B cell (primary cell): ENCODE measurements at regions of chr12 and their contacts with region 1.

Region 1: DNA sequence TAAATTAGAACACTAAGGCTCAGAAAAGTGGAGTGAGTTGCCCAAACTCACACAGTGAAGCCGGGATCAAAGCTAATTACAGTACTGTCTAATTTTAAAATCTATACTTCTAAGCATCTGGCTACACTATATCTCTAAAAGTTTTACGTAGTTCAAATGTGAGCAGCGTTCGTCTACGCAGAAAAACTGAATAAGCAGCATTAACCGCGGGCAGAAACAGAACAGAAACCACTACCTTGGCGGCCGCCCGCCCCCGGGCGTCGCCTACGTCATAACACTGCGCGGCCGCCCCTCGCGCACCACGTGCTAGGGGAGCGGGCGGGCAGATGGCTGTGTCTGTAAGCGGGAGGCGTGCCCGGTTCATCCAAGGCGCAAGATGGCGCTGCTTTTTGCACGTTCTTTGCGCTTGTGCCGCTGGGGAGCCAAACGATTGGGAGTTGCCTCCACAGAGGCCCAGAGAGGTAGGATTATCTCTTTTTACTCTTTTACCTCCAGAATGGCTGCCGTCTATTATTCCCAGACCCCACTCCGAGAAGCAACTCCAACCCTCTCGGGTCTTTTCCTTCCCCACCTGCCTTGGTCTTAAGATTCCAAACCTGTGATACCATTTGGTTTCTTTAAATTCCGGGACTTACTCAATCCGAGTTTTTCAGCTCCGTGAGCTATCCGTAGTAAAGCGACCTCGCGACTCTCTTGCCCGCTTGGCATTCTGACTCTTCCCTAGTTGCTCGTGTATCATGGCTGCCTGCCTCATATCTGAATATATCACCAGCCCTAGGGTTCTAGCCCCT is at the start of gene SPRYD4:
- DNase-seq: peak; percentile 97
- ATAC-seq: peak; percentile 93
- H3K4me3 ChIP-seq: peak within 1 kb of the TSS; percentile 91 to 100 (median 96)
- H3K4me3 Mint-ChIP-seq: peak within 1 kb of the TSS; percentile 93
- H3K27ac ChIP-seq: peak within 1 kb of the TSS; percentile 86 to 87
- H3K27ac Mint-ChIP-seq: peak within 1 kb of the TSS; percentile 98
- H3K4me1 ChIP-seq: peaks cover 12 to 28% of the 10 kb centered on the region in 2 donors
- H3K4me1 Mint-ChIP-seq: peaks cover 28% of the 10 kb centered on the region
- H3K27me3 ChIP-seq: no peaks in the 10 kb centered on the region
- H3K27me3 Mint-ChIP-seq: no peaks in the 10 kb centered on the region
- CTCF ChIP-seq: peak; percentile 30
- total RNA-seq, gene SPRYD4: 7.4 and 8.0 TPM in 2 replicates

Region 2: DNA sequence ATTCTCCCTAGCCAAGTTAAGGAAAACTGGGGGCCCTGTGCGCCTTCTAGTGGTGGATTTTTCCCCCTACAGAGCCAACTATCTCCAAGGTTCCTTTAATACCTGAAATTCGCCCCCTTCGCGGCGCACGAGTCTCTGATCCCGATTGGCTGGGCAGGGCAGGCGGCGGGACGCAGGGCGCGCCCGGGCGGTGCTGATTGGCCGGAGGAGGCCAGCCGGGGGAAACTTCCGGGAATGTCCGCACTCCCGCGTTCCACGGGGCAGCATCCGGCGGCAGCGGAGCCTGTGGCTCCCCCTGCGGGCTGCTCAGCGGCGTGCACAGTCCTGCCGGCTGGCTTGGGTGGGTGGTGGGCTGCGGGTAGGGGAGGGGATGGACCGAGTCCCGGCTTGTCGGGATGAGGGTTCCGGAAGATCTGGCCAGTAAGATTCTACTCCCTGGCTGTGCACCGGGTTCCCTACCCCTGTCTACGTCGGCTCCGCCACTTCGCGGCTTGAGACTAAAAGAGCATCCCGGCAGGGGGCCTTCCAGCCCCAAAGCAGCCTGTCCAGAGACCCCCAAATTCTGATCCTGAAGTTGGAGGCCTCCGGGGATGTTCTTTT is 244.2 kb before region 1 on chr12 and contains the start of gene NABP2:
- CTCF ChIA-PET with region 1: interaction called, 11 read pairs
- POLR2A ChIA-PET with region 1: no interaction called
- intact Hi-C with region 1: loop called (anchors 1 kb)
- DNase-seq: peak; percentile 94
- ATAC-seq: peak; percentile 72
- H3K4me3 ChIP-seq: peak within 1 kb of the TSS; percentile 41 to 71 (median 62)
- H3K4me3 Mint-ChIP-seq: peak within 1 kb of the TSS; percentile 100
- H3K27ac ChIP-seq: peak within 1 kb of the TSS; percentile 53 to 79
- H3K27ac Mint-ChIP-seq: peak within 1 kb of the TSS; percentile 87
- H3K4me1 ChIP-seq: peaks cover 26 to 48% of the 10 kb centered on the region in 2 donors
- H3K4me1 Mint-ChIP-seq: peaks cover 47% of the 10 kb centered on the region
- H3K27me3 ChIP-seq: no peaks in the 10 kb centered on the region
- H3K27me3 Mint-ChIP-seq: no peaks in the 10 kb centered on the region
- CTCF ChIP-seq: peak; percentile 93
- total RNA-seq, gene NABP2: 12.4 and 14.9 TPM in 2 replicates

Region 3: GRCh38 chr12:56286044-56286830 is 182.2 kb before region 1 on chr12:
- CTCF ChIA-PET with region 1: interaction called, 9 read pairs
- POLR2A ChIA-PET with region 1: interaction called, 3 read pairs
- intact Hi-C with region 1: loop called (anchors 1 kb)
- DNase-seq: no peak
- ATAC-seq: no peak
- H3K4me3 ChIP-seq: no peak overlapping the region
- H3K4me3 Mint-ChIP-seq: no peak overlapping the region
- H3K27ac ChIP-seq: no peak overlapping the region
- H3K27ac Mint-ChIP-seq: no peak overlapping the region
- H3K4me1 ChIP-seq: peaks cover 0 to 5% of the 10 kb centered on the region in 2 donors
- H3K4me1 Mint-ChIP-seq: peaks cover 10% of the 10 kb centered on the region
- H3K27me3 ChIP-seq: no peaks in the 10 kb centered on the region
- H3K27me3 Mint-ChIP-seq: no peaks in the 10 kb centered on the region
- CTCF ChIP-seq: no peak

Region 4: DNA sequence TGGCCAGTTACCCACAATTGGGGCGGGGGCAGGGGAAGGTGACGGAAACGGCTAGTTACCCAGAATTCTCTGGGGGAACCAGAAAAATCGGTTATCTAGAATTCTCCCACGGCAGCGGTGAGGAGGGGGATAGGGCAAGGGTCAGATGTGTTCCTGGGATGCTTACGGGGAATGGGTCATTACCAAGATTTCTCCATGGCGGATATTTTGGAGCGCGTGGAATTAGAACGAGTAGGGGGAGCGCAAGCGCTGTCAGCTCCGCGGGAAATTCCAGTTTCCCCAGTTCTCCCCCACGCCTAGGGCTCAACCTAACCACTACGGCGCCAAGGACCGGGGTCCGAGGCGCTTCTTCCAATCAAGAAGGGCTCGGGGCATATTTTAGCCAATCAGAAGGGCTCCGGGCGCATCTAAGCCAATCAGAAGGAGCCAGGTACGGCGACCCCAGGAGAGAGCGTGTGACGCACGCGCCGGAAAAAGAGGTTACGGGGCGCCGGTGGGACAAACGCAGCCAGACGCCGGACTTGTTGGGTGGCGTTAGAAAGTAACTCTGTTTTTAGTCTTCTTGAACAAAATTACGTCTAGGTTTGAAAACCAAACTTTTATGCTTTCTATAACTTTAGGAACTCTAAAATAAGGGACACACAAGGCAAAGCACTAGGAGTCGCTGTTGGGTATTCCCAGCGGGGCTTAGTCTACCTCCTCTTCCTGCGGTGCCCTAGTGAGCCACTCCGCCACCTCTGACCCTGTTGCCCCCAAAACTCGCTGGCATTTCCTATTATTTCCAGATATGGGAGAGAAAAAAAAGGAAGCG is 134.5 kb before region 1 on chr12 and contains the start of gene PAN2:
- CTCF ChIA-PET with region 1: interaction called, 45 read pairs
- POLR2A ChIA-PET with region 1: interaction called, 13 read pairs
- intact Hi-C with region 1: loop called (anchors 1 kb)
- DNase-seq: peak; percentile 98
- ATAC-seq: peak; percentile 90
- H3K4me3 ChIP-seq: peak within 1 kb of the TSS; percentile 63 to 88 (median 80)
- H3K4me3 Mint-ChIP-seq: peak within 1 kb of the TSS; percentile 99
- H3K27ac ChIP-seq: peak within 1 kb of the TSS; percentile 94 to 100
- H3K27ac Mint-ChIP-seq: peak within 1 kb of the TSS; percentile 100
- H3K4me1 ChIP-seq: peaks cover 35 to 44% of the 10 kb centered on the region in 2 donors
- H3K4me1 Mint-ChIP-seq: peaks cover 52% of the 10 kb centered on the region
- H3K27me3 ChIP-seq: no peaks in the 10 kb centered on the region
- H3K27me3 Mint-ChIP-seq: no peaks in the 10 kb centered on the region
- CTCF ChIP-seq: peak; percentile 65
- total RNA-seq, gene PAN2: 216 and 230 TPM in 2 replicates

Region 5: GRCh38 chr12:56448860-56449621 is 19.4 kb before region 1 on chr12 and contains the start of gene TIMELESS:
- CTCF ChIA-PET with region 1: interaction called, 32 read pairs
- POLR2A ChIA-PET with region 1: interaction called, 9 read pairs
- intact Hi-C with region 1: loop called (anchors 1 kb)
- DNase-seq: peak; percentile 95
- ATAC-seq: peak; percentile 96
- H3K4me3 ChIP-seq: peak within 1 kb of the TSS; percentile 69 to 98 (median 83)
- H3K4me3 Mint-ChIP-seq: peak within 1 kb of the TSS; percentile 90
- H3K27ac ChIP-seq: peak within 1 kb of the TSS; percentile 53 to 85
- H3K27ac Mint-ChIP-seq: peak within 1 kb of the TSS; percentile 92
- H3K4me1 ChIP-seq: peaks cover 10 to 12% of the 10 kb centered on the region in 2 donors
- H3K4me1 Mint-ChIP-seq: peaks cover 23% of the 10 kb centered on the region
- H3K27me3 ChIP-seq: no peaks in the 10 kb centered on the region
- H3K27me3 Mint-ChIP-seq: no peaks in the 10 kb centered on the region
- CTCF ChIP-seq: no peak
- total RNA-seq, gene TIMELESS: 44.4 and 46.6 TPM in 2 replicates